ENCODE measurements at regions of chr7 and their contacts with region 1.

Region 1: GRCh38 chr7:128946923-128947830 is 9.4 kb downstream of the IRF5 start:
- DNase-seq: no peak
- H3K4me3 ChIP-seq: no peak overlapping the region
- H3K27ac ChIP-seq: no peak overlapping the region
- H3K4me1 ChIP-seq: peaks cover 0 to 3% (median under 1%) of the 10 kb centered on the region in 4 experiments; a peak in 1 of 7 replicates
- H3K27me3 ChIP-seq: no peaks in the 10 kb centered on the region; a peak in 1 of 7 replicates
- CTCF ChIP-seq: peak; percentile 67 to 73 (median 70)
- EP300 ChIP-seq: no peak
- POLR2A ChIP-seq: no peak
- RAD21 ChIP-seq: peak; percentile 31 to 64; a peak in 3 of 4 replicates

Region 2: GRCh38 chr7:128666200-128666599 is 281.0 kb before region 1 on chr7:
- CTCF ChIA-PET with region 1: no interaction called
- POLR2A ChIA-PET with region 1: no interaction called
- DNase-seq: no peak
- H3K4me3 ChIP-seq: no peak overlapping the region
- H3K27ac ChIP-seq: no peak overlapping the region
- H3K4me1 ChIP-seq: no peaks in the 10 kb centered on the region
- H3K27me3 ChIP-seq: no peaks in the 10 kb centered on the region
- CTCF ChIP-seq: peak in 1 of 3 experiments; percentile 39; a peak in 2 of 4 replicates
- EP300 ChIP-seq: no peak
- POLR2A ChIP-seq: no peak
- RAD21 ChIP-seq: peak; percentile 18 to 29; a peak in 3 of 4 replicates

Region 3: GRCh38 chr7:128841921-128842651 is 105.1 kb before region 1 on chr7:
- CTCF ChIA-PET with region 1: no interaction called
- POLR2A ChIA-PET with region 1: no interaction called
- DNase-seq: peak in 1 of 2 experiments; percentile 88
- H3K4me3 ChIP-seq: no peak overlapping the region
- H3K27ac ChIP-seq: no peak overlapping the region
- H3K4me1 ChIP-seq: peaks cover 0 to 10% (median 5%) of the 10 kb centered on the region in 4 experiments; a peak in 6 of 7 replicates
- H3K27me3 ChIP-seq: no peaks in the 10 kb centered on the region; a peak in 1 of 7 replicates
- CTCF ChIP-seq: peak in 2 of 3 experiments; percentile 71 to 74; a peak in 3 of 4 replicates
- EP300 ChIP-seq: no peak; a peak in 1 of 3 replicates
- POLR2A ChIP-seq: no peak
- RAD21 ChIP-seq: peak; percentile 33 to 53; a peak in 3 of 4 replicates

Region 4: GRCh38 chr7:128904381-128905197 is 42.6 kb before region 1 on chr7:
- CTCF ChIA-PET with region 1: interaction called, 42 read pairs
- POLR2A ChIA-PET with region 1: interaction called, 3 read pairs
- DNase-seq: peak in 1 of 2 experiments; percentile 54
- H3K4me3 ChIP-seq: no peak overlapping the region
- H3K27ac ChIP-seq: no peak overlapping the region
- H3K4me1 ChIP-seq: peaks cover 2 to 9% (median 5%) of the 10 kb centered on the region in 4 experiments; a peak in 5 of 7 replicates
- H3K27me3 ChIP-seq: peaks cover 0 to 12% (median 10%) of the 10 kb centered on the region in 4 experiments; a peak in 5 of 7 replicates
- CTCF ChIP-seq: peak in 2 of 3 experiments; percentile 65; a peak in 3 of 4 replicates
- EP300 ChIP-seq: no peak
- POLR2A ChIP-seq: no peak
- RAD21 ChIP-seq: peak; percentile 71

Region 5: GRCh38 chr7:128909625-128910257 is 37.4 kb before region 1 on chr7:
- CTCF ChIA-PET with region 1: interaction called, 42 read pairs
- POLR2A ChIA-PET with region 1: interaction called, 3 read pairs
- DNase-seq: peak in 1 of 2 experiments; percentile 71
- H3K4me3 ChIP-seq: peak overlapping the region; percentile 37 to 67 (median 52)
- H3K27ac ChIP-seq: no peak overlapping the region
- H3K4me1 ChIP-seq: peaks cover 4 to 35% (median 20%) of the 10 kb centered on the region in 4 experiments
- H3K27me3 ChIP-seq: peaks cover 12 to 52% (median 37%) of the 10 kb centered on the region in 4 experiments
- CTCF ChIP-seq: no peak
- EP300 ChIP-seq: no peak
- POLR2A ChIP-seq: no peak
- RAD21 ChIP-seq: no peak

Region 6: GRCh38 chr7:128919881-128920799 is 27.0 kb before region 1 on chr7:
- CTCF ChIA-PET with region 1: interaction called, 32 read pairs
- POLR2A ChIA-PET with region 1: no interaction called
- DNase-seq: peak in 1 of 2 experiments; percentile 57
- H3K4me3 ChIP-seq: no peak overlapping the region
- H3K27ac ChIP-seq: no peak overlapping the region
- H3K4me1 ChIP-seq: peaks cover 2 to 12% (median 3%) of the 10 kb centered on the region in 4 experiments; a peak in 4 of 7 replicates
- H3K27me3 ChIP-seq: peaks cover 16 to 25% (median 24%) of the 10 kb centered on the region in 4 experiments
- CTCF ChIP-seq: peak; percentile 22 to 27 (median 24)
- EP300 ChIP-seq: no peak
- POLR2A ChIP-seq: no peak
- RAD21 ChIP-seq: peak; percentile 26 to 52; a peak in 3 of 4 replicates

Region 7: GRCh38 chr7:128933180-128933891 is 13.8 kb before region 1 on chr7:
- CTCF ChIA-PET with region 1: interaction called, 16 read pairs
- POLR2A ChIA-PET with region 1: interaction called, 7 read pairs
- DNase-seq: no peak
- H3K4me3 ChIP-seq: no peak overlapping the region
- H3K27ac ChIP-seq: no peak overlapping the region
- H3K4me1 ChIP-seq: peaks cover 0 to 3% (median under 1%) of the 10 kb centered on the region in 4 experiments; a peak in 2 of 7 replicates
- H3K27me3 ChIP-seq: peaks cover 15 to 34% (median 22%) of the 10 kb centered on the region in 4 experiments
- CTCF ChIP-seq: no peak
- EP300 ChIP-seq: no peak
- POLR2A ChIP-seq: no peak
- RAD21 ChIP-seq: no peak

Measured in H1 (cell line).